Adrenal gland (tissue), 19 donors: ENCODE measurements at regions of chr19 and their contacts with region 1.

Region 1: GRCh38 chr19:23351806-23352205 is 43.5 kb downstream of the ZNF91 start:
- DNase-seq: no peak
- H3K4me3 ChIP-seq: no peak overlapping the region
- H3K27ac ChIP-seq: no peak overlapping the region
- H3K4me1 ChIP-seq: no peaks in the 10 kb centered on the region
- H3K27me3 ChIP-seq: no peaks in the 10 kb centered on the region
- CTCF ChIP-seq: no peak
- POLR2A ChIP-seq: no peak

Region 2: GRCh38 chr19:24140099-24140498 is 788.3 kb after region 1 on chr19:
- intact Hi-C with region 1: loop called in 1 of 2 experiments (anchors 10 kb)
- DNase-seq: no peak
- H3K4me3 ChIP-seq: no peak overlapping the region
- H3K27ac ChIP-seq: no peak overlapping the region
- H3K4me1 ChIP-seq: no peaks in the 10 kb centered on the region
- H3K27me3 ChIP-seq: no peaks in the 10 kb centered on the region
- CTCF ChIP-seq: no peak
- POLR2A ChIP-seq: no peak